Mammary epithelial cell (primary cell): ENCODE measurements at regions of chr13 and their contacts with region 1.

Region 1: DNA sequence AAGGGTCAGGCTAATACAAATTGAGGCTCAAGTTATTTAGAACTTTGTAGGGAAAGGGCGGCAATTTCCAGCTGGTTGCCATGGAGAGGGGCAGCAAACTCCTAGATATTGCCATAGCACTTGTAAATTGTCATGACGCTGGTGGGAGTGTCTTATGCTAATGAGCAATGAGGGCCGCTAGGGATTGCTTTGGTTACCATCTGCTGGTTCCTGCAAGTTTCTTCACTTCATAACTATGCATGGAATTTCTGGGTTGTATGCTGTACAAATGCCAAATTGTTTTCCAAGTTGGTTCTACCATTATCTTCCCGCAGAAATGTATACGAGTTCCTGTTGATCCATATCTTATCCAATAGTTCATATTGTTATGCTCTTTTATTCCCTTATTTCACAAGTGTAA is 1339.4 kb downstream of the EFNB2 start:
- DNase-seq: no peak
- H3K4me3 ChIP-seq: no peak overlapping the region
- H3K27ac ChIP-seq: no peak overlapping the region
- H3K4me1 ChIP-seq: no peaks in the 10 kb centered on the region
- H3K27me3 ChIP-seq: no peaks in the 10 kb centered on the region
- CTCF ChIP-seq: no peak

Region 2: GRCh38 chr13:105207572-105208293 is 11.7 kb after region 1 on chr13:
- CTCF ChIA-PET with region 1: no interaction called
- dilution Hi-C with region 1: no loop called
- in situ Hi-C with region 1: no loop called
- intact Hi-C with region 1: loop called (anchors 1 kb)
- DNase-seq: no peak
- H3K4me3 ChIP-seq: no peak overlapping the region
- H3K27ac ChIP-seq: no peak overlapping the region
- H3K4me1 ChIP-seq: no peaks in the 10 kb centered on the region
- H3K27me3 ChIP-seq: no peaks in the 10 kb centered on the region
- CTCF ChIP-seq: no peak

Region 3: GRCh38 chr13:105232439-105232838 is 36.4 kb after region 1 on chr13:
- CTCF ChIA-PET with region 1: no interaction called
- dilution Hi-C with region 1: no loop called
- in situ Hi-C with region 1: no loop called
- intact Hi-C with region 1: no loop called
- DNase-seq: no peak
- H3K4me3 ChIP-seq: no peak overlapping the region
- H3K27ac ChIP-seq: no peak overlapping the region
- H3K4me1 ChIP-seq: no peaks in the 10 kb centered on the region
- H3K27me3 ChIP-seq: no peaks in the 10 kb centered on the region
- CTCF ChIP-seq: no peak